IMR-90 (cell line): ENCODE measurements at regions of chr1 and their contacts with region 1.

Region 1: GRCh38 chr1:96966536-96967138 is 245.1 kb downstream of the PTBP2 start:
- DNase-seq: peak; percentile 76
- ATAC-seq: peak; percentile 85
- H3K4me3 ChIP-seq: no peak overlapping the region
- H3K27ac ChIP-seq: no peak overlapping the region
- H3K4me1 ChIP-seq: peaks cover 4% of the 10 kb centered on the region
- H3K27me3 ChIP-seq: no peaks in the 10 kb centered on the region
- CTCF ChIP-seq: peak; percentile 92
- POLR2A ChIP-seq: no peak
- RAD21 ChIP-seq: peak; percentile 94

Region 2: GRCh38 chr1:96721416-96722160 is 245.0 kb before region 1 on chr1 and contains the start of gene PTBP2:
- CTCF ChIA-PET with region 1: no interaction called
- POLR2A ChIA-PET with region 1: no interaction called
- dilution Hi-C with region 1: no loop called
- in situ Hi-C with region 1: no loop called
- intact Hi-C with region 1: loop called (anchors 10 kb)
- DNase-seq: peak; percentile 69
- ATAC-seq: peak; percentile 96
- H3K4me3 ChIP-seq: peak within 1 kb of the TSS; percentile 96
- H3K27ac ChIP-seq: peak within 1 kb of the TSS; percentile 96
- H3K4me1 ChIP-seq: no peaks in the 10 kb centered on the region; the same call in 1 of the 2 replicates
- H3K27me3 ChIP-seq: no peaks in the 10 kb centered on the region
- CTCF ChIP-seq: no peak
- POLR2A ChIP-seq: peak; percentile 74; the same call in 1 of the 2 replicates
- RAD21 ChIP-seq: no peak
- total RNA-seq, gene PTBP2: 37.8 and 38.6 TPM in 2 replicates

Region 3: DNA sequence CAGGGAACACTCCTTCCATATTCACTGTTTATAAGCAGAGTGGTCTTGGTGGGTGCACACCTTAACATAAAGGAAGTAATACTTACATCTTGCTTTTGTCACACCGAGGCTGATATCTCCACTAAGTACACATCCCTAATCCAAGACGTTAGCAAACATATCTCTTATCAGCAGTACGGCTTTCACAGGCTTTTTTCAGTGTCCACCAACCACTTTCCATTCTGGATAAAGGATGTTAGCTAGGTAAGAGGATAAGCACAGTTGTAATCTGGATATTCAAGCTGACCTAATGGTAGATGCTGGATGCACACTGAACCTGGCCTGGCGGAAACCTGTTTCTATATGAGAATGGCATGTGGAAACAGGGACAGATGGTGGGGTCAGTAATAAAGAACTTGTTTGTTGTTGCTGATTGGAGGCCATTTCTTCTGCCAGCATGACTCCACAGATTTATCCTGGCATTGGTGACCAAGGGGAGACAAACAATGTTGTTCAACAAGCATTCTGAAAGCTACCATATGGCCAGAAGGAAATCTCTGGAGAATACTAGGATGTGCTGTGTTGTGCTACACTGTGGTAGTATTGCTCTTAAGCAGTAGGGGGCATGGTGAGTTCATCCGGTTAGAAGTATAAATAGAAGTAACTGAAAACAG is 171.4 kb after region 1 on chr1:
- CTCF ChIA-PET with region 1: interaction called, 3 read pairs
- POLR2A ChIA-PET with region 1: no interaction called
- dilution Hi-C with region 1: no loop called
- in situ Hi-C with region 1: no loop called
- intact Hi-C with region 1: loop called (anchors 5 kb)
- DNase-seq: peak; percentile 78
- ATAC-seq: peak; percentile 96
- H3K4me3 ChIP-seq: no peak overlapping the region
- H3K27ac ChIP-seq: no peak overlapping the region
- H3K4me1 ChIP-seq: peaks cover 3% of the 10 kb centered on the region
- H3K27me3 ChIP-seq: no peaks in the 10 kb centered on the region
- CTCF ChIP-seq: peak; percentile 69
- POLR2A ChIP-seq: no peak
- RAD21 ChIP-seq: peak; percentile 65

Region 4: GRCh38 chr1:97334454-97334853 is 367.8 kb after region 1 on chr1:
- CTCF ChIA-PET with region 1: no interaction called
- POLR2A ChIA-PET with region 1: no interaction called
- dilution Hi-C with region 1: no loop called
- in situ Hi-C with region 1: no loop called
- intact Hi-C with region 1: loop called (anchors 10 kb)
- DNase-seq: peak; percentile 91
- ATAC-seq: peak; percentile 68
- H3K4me3 ChIP-seq: no peak overlapping the region
- H3K27ac ChIP-seq: no peak overlapping the region
- H3K4me1 ChIP-seq: peaks cover 12% of the 10 kb centered on the region
- H3K27me3 ChIP-seq: no peaks in the 10 kb centered on the region
- CTCF ChIP-seq: no peak
- POLR2A ChIP-seq: no peak
- RAD21 ChIP-seq: no peak

Region 5: GRCh38 chr1:97791251-97791650 is 824.6 kb after region 1 on chr1:
- CTCF ChIA-PET with region 1: no interaction called
- POLR2A ChIA-PET with region 1: no interaction called
- dilution Hi-C with region 1: no loop called
- in situ Hi-C with region 1: loop called (anchors 25 kb)
- intact Hi-C with region 1: no loop called
- DNase-seq: no peak
- ATAC-seq: no peak
- H3K4me3 ChIP-seq: no peak overlapping the region
- H3K27ac ChIP-seq: no peak overlapping the region
- H3K4me1 ChIP-seq: no peaks in the 10 kb centered on the region
- H3K27me3 ChIP-seq: no peaks in the 10 kb centered on the region
- CTCF ChIP-seq: no peak
- POLR2A ChIP-seq: no peak
- RAD21 ChIP-seq: no peak

Region 6: DNA sequence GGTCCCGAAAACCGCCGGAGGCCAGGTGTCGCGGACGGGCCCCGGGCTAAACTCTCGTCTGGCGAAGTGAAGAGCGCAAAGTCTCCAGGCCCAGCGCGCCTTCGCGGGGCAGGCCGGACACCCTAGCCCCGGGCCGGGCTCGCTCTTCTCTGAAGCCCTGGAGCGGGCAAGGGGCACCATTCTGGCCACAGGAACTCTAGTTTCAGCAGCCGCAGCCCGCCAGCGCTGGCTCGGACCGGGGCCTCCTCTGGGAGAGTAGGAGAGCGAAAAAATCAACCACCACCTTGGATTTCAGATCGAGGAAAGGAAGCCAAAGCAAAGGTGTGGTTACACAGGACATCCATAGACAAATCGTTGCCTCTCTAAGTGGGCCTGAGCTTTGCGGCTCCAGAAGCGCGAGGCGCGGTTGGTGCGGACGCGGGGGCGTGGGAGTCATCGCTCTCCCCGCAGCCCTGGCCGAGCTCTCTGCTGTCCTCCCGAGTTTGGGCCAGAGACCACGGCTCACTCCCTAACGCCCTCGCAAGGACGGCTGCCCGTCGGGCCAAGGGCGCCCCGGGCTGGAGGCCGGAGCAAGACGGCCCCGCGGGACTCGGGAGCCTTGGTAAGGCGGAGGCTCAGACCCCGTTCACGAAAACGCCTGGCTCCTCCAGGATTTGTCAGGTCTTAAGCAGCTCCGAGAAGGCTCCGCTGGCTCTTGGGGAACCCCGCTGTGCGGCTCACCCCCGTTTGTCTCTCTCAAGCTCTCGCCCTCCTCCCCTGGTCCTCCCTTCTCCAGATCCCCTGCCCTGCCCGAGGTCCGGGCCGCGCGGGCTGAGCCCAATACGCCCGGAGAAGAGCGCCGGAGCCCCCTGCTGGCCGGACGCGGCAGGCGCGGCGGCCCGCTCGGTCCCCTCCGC is 1087.1 kb after region 1 on chr1:
- CTCF ChIA-PET with region 1: no interaction called
- POLR2A ChIA-PET with region 1: no interaction called
- dilution Hi-C with region 1: no loop called
- in situ Hi-C with region 1: loop called (anchors 10 kb)
- intact Hi-C with region 1: loop called (anchors 2 kb)
- DNase-seq: peak; percentile 65
- ATAC-seq: peak; percentile 92
- H3K4me3 ChIP-seq: peak overlapping the region; percentile 41
- H3K27ac ChIP-seq: peak overlapping the region; percentile 60
- H3K4me1 ChIP-seq: peaks cover 5% of the 10 kb centered on the region
- H3K27me3 ChIP-seq: no peaks in the 10 kb centered on the region
- CTCF ChIP-seq: peak; percentile 74
- POLR2A ChIP-seq: no peak
- RAD21 ChIP-seq: peak; percentile 70